BJ (cell line): ENCODE measurements at regions of chr3 and their contacts with region 1.

Region 1: GRCh38 chr3:122754929-122755328 is 38.7 kb downstream of the HSPBAP1 start:
- DNase-seq: no peak
- H3K4me3 ChIP-seq: no peak overlapping the region
- H3K27me3 ChIP-seq: no peaks in the 10 kb centered on the region
- CTCF ChIP-seq: peak; percentile 78

Region 2: DNA sequence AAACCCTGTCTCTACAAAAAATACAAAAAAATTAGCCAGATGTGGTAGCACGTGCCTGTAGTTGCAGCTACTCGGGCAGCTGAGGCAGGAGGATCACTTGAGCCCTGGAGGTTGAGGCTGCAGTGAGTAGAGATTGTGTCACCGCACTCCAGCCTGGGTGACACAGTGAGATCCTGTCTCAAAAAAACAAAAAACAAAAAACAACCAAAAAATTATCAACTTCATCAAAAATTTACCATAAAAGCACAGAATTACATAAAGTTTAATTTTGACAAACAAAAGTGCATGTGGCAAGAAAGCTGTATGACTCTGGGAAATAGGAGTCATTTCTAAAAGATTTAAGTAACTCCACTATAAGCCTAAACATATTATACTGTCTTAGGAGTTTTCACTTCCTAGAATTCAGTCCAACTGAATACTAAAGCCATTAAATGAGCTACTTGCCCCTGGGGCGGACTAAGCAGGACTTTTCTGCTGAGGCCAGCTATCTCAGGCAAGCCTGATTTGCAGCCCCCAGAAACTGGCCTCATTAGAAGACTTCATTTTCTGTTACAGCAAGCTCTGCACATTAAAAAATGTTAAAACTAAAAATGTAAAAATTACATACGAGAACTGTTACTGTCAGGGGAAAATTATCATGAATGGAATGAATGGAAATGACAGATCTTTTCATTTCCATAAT is 15.7 kb after region 1 on chr3:
- CTCF ChIA-PET with region 1: interaction called, 10 read pairs
- POLR2A ChIA-PET with region 1: no interaction called
- DNase-seq: no peak
- H3K4me3 ChIP-seq: no peak overlapping the region
- H3K27me3 ChIP-seq: no peaks in the 10 kb centered on the region
- CTCF ChIP-seq: no peak